ENCODE measurements at regions of chr1 and their contacts with region 1.

Region 1: DNA sequence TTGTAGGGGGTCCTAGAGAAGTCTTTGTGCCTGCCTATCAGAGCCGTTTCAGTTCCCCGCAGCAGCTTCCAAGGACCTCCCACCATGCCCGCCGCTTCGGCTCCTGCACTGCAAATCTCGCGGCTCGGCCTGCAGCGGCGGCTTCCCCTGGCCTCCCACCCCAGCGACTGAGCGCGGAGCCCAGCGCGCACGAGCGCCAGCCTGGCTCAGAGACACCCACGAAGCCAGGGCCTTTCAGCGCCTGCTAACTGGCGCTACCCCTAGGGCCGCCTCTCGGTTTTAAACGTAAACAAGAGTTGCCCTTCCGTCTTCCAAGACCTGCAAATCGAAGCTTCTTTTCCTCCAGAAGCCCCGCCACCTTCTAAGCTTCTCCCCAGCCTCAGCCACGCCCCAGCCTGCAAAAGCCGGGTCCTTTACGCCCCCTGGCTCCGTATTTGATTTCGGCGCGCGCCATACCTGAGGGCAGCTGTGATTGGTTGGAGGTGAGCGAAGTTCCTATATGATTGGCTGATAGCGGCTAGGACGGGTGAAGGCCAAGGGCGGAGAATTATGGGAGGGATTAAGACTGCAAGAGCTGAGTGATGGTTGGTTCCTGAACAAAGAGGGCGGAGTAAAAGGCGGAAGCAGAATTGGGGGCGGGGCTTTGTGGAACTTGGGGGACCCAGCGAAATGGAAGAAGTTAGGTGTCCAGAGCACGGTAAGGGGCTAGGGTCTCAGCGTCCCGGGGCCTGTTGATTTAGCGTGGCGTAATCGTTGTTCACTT is at the start of gene TTF2:
- DNase-seq: peak; percentile 98 to 100
- H3K4me3 ChIP-seq: peak within 1 kb of the TSS; percentile 67
- H3K27ac ChIP-seq: peak within 1 kb of the TSS; percentile 70
- H3K4me1 ChIP-seq: peaks cover 24% of the 10 kb centered on the region
- H3K27me3 ChIP-seq: no peaks in the 10 kb centered on the region
- CTCF ChIP-seq: peak; percentile 50; the same call in 1 of the 2 replicates
- total RNA-seq, gene TTF2: 62.2 and 63.4 TPM in 2 replicates

Region 2: DNA sequence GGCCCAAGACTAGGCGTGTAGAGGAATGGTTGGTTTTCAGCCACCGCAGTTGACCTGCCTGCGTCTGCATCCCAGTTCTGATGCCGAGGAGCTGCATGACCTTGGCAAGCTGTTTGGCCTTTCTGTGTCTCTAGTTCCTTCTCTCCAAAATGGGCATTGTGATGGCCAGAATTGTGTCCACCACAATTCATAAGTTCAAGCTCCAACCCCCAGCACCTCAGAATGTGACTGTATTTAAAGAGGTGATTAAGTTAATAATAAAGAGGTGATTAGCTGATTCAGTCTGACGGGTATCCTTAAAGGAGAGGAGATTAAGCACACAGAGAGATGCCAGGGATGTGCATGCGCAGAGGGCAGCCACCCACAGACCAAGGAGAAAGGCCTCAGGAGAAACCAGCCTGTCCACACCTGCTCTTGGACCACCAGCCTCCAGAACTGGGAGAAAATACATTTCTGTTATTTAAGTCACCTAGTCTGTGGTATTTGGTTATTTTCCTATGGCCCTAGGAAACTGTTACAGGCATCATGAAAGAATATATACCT is 920.2 kb before region 1 on chr1:
- CTCF ChIA-PET with region 1: no interaction called
- POLR2A ChIA-PET with region 1: no interaction called
- intact Hi-C with region 1: loop called (anchors 5 kb)
- DNase-seq: no peak
- H3K4me3 ChIP-seq: no peak overlapping the region
- H3K27ac ChIP-seq: no peak overlapping the region
- H3K4me1 ChIP-seq: no peaks in the 10 kb centered on the region
- H3K27me3 ChIP-seq: no peaks in the 10 kb centered on the region
- CTCF ChIP-seq: no peak

Region 3: DNA sequence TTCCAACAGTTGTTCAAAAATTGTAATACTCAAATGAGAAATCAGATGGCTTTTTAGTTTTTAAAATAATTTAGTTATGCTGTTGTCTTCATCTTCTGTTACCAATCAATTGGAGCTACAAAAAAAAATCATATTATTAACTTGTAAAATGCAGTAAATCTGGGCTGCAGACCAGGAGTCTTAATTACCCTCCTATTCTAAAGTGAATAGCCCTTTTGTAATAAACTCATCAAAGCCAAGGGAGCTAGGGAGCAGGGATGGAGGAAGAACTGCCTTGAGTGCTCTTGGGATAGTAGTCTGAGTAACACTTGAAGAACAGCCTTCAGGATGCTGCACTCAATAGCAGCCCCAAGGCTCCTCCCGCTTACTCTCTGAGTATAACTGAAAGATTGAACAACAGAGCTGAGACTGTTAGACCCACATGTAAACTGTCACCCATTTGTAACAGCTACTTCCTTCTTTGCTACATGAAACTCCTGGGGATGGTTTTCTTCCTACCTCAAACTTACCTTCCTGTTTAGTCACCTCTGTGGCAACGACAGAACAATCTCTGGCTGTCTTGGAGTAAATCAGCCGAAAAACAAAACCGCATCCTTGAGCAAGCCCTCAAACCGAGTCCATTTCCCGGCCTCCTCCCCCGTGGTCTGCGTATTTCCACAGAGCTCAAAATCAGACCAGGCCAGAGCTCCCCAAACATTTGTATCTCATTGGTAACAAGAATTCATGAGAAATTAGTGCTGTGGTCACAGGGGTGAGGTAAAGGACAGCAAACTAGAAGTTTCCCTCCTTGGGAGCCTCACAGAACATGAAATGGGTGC is 544.9 kb before region 1 on chr1:
- CTCF ChIA-PET with region 1: no interaction called
- POLR2A ChIA-PET with region 1: no interaction called
- intact Hi-C with region 1: loop called (anchors 5 kb)
- DNase-seq: peak; percentile 69 to 100
- H3K4me3 ChIP-seq: peak overlapping the region; percentile 28; the same call in 1 of the 2 replicates
- H3K27ac ChIP-seq: peak overlapping the region; percentile 98
- H3K4me1 ChIP-seq: peaks cover 77% of the 10 kb centered on the region
- H3K27me3 ChIP-seq: no peaks in the 10 kb centered on the region
- CTCF ChIP-seq: no peak

Region 4: DNA sequence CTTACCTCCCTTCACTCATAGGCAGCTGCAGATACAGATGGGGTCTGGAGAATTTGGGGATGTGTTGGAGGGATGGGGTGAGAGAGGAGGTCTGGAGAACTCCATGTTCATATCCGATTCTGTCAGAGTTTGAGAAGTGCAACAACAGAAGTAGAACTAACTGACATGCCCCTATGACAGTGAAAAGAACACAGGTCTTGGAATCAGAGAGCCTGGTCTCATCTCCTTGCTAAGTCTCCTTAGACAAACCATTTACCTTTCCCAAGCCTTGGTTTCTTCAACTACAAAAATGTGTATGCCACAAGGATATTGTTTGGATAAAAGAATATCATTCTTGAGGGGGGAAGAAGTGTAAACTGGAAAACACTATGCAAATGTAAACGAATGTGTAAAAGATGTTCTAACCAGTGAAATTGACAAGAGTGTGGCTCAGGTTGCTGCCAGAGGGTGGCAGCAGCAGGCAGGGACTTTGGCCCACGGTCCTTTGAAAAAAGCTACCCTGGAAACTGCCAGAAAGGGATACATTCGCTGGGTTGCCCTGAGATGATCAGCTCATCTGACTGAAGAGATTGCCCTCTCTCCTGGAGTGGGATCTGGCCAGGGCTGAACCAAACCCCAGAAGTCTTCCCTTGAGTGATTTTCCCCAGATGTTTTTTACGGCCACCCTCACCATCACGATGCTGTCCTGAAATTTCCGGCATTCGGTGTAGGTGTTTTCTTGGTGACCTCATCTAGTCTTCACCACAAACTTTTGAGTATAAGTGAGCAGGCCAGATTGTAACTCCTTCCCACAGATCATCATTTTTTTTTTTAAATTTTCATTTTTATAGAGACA is 322.6 kb before region 1 on chr1:
- CTCF ChIA-PET with region 1: interaction called, 5 read pairs
- POLR2A ChIA-PET with region 1: interaction called, 11 read pairs
- intact Hi-C with region 1: loop called (anchors 1 kb)
- DNase-seq: peak in 1 of 2 experiments; percentile 45
- H3K4me3 ChIP-seq: no peak overlapping the region
- H3K27ac ChIP-seq: no peak overlapping the region
- H3K4me1 ChIP-seq: no peaks in the 10 kb centered on the region
- H3K27me3 ChIP-seq: no peaks in the 10 kb centered on the region
- CTCF ChIP-seq: peak; percentile 95

Region 5: GRCh38 chr1:116770625-116771024 is 289.2 kb before region 1 on chr1:
- CTCF ChIA-PET with region 1: no interaction called
- POLR2A ChIA-PET with region 1: interaction called, 17 read pairs
- intact Hi-C with region 1: no loop called
- DNase-seq: no peak
- H3K4me3 ChIP-seq: no peak overlapping the region
- H3K27ac ChIP-seq: no peak overlapping the region
- H3K4me1 ChIP-seq: peaks cover 9% of the 10 kb centered on the region
- H3K27me3 ChIP-seq: no peaks in the 10 kb centered on the region
- CTCF ChIP-seq: no peak

Region 6: DNA sequence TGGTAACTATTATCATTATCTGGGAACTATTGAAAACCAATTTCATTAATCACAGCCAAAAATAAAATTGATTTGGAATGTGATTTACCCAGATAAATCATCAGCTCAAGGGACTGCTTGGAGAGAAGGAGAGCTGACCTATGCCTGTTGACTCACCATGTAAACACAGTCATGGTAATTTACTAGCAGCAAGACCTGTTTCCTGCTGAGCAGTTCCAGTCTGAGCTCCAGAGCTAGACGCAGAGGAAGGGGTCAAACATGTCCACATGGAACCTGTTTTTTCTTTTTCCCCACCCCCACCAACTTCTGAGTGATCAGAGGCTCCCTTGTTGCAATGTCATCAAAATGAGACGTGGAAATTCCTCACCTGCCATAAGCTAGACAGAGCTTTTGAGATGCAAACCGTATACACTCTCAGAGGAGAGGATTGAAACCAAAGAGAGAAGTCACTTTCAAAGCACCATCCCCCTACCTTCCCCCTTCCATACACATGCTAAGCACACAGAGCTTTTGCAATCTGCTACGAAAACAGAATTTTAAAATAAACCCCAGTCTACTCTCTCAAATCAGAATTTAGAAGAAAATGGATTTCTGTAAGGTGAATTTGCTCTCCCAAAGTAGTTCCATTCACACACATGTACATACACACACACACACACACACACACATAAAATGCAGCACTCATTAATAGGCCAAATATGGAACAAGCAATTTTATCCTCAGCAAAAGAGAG is 206.0 kb before region 1 on chr1:
- CTCF ChIA-PET with region 1: no interaction called
- POLR2A ChIA-PET with region 1: no interaction called
- intact Hi-C with region 1: loop called (anchors 2 kb)
- DNase-seq: peak; percentile 71 to 100
- H3K4me3 ChIP-seq: peak overlapping the region; percentile 34; the same call in 1 of the 2 replicates
- H3K27ac ChIP-seq: peak overlapping the region; percentile 77
- H3K4me1 ChIP-seq: peaks cover 47% of the 10 kb centered on the region
- H3K27me3 ChIP-seq: no peaks in the 10 kb centered on the region
- CTCF ChIP-seq: no peak

Region 7: GRCh38 chr1:117036018-117036461 is 23.8 kb before region 1 on chr1:
- CTCF ChIA-PET with region 1: no interaction called
- POLR2A ChIA-PET with region 1: no interaction called
- intact Hi-C with region 1: no loop called
- DNase-seq: no peak
- H3K4me3 ChIP-seq: no peak overlapping the region
- H3K27ac ChIP-seq: no peak overlapping the region
- H3K4me1 ChIP-seq: no peaks in the 10 kb centered on the region
- H3K27me3 ChIP-seq: no peaks in the 10 kb centered on the region
- CTCF ChIP-seq: no peak

Region 8: GRCh38 chr1:117077267-117077666 is 17.4 kb after region 1 on chr1:
- CTCF ChIA-PET with region 1: no interaction called
- POLR2A ChIA-PET with region 1: interaction called, 10 read pairs
- intact Hi-C with region 1: no loop called
- DNase-seq: peak in 1 of 2 experiments; percentile 72
- H3K4me3 ChIP-seq: no peak overlapping the region
- H3K27ac ChIP-seq: peak overlapping the region; percentile 50
- H3K4me1 ChIP-seq: no peaks in the 10 kb centered on the region; the same call in 1 of the 2 replicates
- H3K27me3 ChIP-seq: no peaks in the 10 kb centered on the region
- CTCF ChIP-seq: no peak

Region 9: DNA sequence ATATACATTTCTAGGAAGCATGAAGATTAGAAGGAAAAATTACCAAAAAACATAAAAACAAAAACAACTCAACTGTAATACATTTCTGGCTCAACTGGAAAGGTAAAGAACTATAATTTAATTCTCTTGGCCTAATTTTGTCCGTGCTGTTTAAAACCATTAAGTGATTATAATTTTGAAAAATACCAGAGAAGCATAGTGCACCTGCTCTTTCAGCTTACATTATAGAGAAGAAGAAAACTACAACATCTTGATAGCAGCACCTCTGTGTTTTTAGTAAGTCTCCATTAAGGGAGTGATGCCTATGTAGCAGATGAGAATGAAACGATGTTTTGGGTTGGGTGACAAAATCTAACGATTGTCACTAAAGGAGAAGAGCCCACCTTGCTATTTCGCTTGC is 288.0 kb after region 1 on chr1:
- CTCF ChIA-PET with region 1: no interaction called
- POLR2A ChIA-PET with region 1: no interaction called
- intact Hi-C with region 1: no loop called
- DNase-seq: no peak
- H3K4me3 ChIP-seq: no peak overlapping the region
- H3K27ac ChIP-seq: no peak overlapping the region
- H3K4me1 ChIP-seq: no peaks in the 10 kb centered on the region
- H3K27me3 ChIP-seq: no peaks in the 10 kb centered on the region
- CTCF ChIP-seq: no peak